Activated CD8-positive, alpha-beta T cell treated with anti-CD3 and anti-CD28 coated beads for 36 hours (primary cell): ENCODE measurements at regions of chr7 and their contacts with region 1.

Region 1: DNA sequence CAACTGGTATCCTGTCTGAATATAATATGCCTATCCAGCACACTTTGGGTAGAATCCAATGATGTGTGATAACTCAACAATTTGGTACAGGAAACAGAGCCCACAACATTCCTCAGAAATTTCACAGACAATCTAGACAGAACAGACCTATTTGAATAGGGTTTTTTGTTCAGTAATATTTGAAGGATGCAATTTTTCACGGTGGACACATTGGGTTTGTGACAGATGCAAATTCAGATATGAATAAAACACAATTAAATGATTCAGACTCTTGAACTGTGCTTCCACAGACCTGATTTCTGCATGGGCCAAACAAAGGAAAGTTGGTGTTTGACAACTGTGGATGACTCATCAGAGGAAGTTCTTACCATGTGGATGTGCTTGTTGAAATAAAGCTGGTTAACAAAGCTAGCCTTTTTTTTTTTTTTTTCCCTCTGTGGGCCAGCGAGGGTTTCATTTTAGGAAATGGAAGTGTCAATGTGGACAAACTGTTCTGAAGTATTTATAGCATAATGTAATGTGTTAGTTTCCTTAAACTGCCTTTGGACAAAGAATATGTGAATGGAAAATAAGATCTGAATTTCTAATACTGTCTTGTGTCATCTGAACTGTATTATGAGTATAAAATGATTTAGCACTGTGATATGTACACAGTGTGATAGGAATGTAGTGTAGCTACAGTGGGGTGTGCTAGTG is 43.2 kb upstream of the FAM133B start:
- DNase-seq: peak; percentile 54
- ATAC-seq: peak; percentile 17
- H3K4me3 Mint-ChIP-seq: peak overlapping the region; percentile 39
- H3K27ac Mint-ChIP-seq: peak overlapping the region; percentile 96
- H3K4me1 Mint-ChIP-seq: peaks cover 76% of the 10 kb centered on the region
- H3K27me3 Mint-ChIP-seq: no peaks in the 10 kb centered on the region
- CTCF ChIP-seq: no peak

Region 2: GRCh38 chr7:92402920-92403759 is 230.2 kb before region 1 on chr7:
- CTCF ChIA-PET with region 1: no interaction called
- POLR2A ChIA-PET with region 1: no interaction called
- intact Hi-C with region 1: no loop called
- DNase-seq: no peak
- ATAC-seq: no peak
- H3K4me3 Mint-ChIP-seq: no peak overlapping the region
- H3K27ac Mint-ChIP-seq: no peak overlapping the region
- H3K4me1 Mint-ChIP-seq: peaks cover 17% of the 10 kb centered on the region
- H3K27me3 Mint-ChIP-seq: no peaks in the 10 kb centered on the region
- CTCF ChIP-seq: no peak

Region 3: DNA sequence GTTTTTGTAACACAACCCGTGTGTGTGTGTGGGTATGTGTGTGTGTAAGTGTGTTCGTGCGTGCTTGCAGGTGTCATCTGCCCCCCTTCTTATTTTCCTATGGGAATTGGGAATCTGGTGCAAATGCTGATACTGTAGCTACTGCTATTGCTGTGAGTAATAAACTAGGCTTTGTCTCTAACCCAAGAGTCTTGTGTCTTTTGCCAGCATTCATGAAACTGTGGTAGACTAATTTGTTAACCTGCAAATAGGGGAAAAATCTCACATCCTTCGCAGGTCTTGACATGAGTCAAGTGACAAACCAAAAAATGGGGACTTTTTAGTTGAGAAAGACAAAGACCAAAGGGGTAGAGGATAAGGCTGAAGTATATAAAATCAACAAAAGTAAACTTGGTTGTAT is 14.7 kb after region 1 on chr7:
- CTCF ChIA-PET with region 1: interaction called, 9 read pairs
- POLR2A ChIA-PET with region 1: interaction called, 17 read pairs
- intact Hi-C with region 1: loop called (anchors 2 kb)
- DNase-seq: no peak
- ATAC-seq: peak; percentile 66
- H3K4me3 Mint-ChIP-seq: no peak overlapping the region
- H3K27ac Mint-ChIP-seq: peak overlapping the region; percentile 92
- H3K4me1 Mint-ChIP-seq: peaks cover 85% of the 10 kb centered on the region
- H3K27me3 Mint-ChIP-seq: no peaks in the 10 kb centered on the region
- CTCF ChIP-seq: no peak

Region 4: GRCh38 chr7:92669616-92670165 is 36.3 kb after region 1 on chr7:
- CTCF ChIA-PET with region 1: no interaction called
- POLR2A ChIA-PET with region 1: interaction called, 11 read pairs
- intact Hi-C with region 1: no loop called
- DNase-seq: no peak
- ATAC-seq: no peak
- H3K4me3 Mint-ChIP-seq: no peak overlapping the region
- H3K27ac Mint-ChIP-seq: peak overlapping the region; percentile 17
- H3K4me1 Mint-ChIP-seq: peaks cover 50% of the 10 kb centered on the region
- H3K27me3 Mint-ChIP-seq: no peaks in the 10 kb centered on the region
- CTCF ChIP-seq: no peak

Region 5: GRCh38 chr7:92682903-92683539 is 49.7 kb after region 1 on chr7:
- CTCF ChIA-PET with region 1: interaction called, 10 read pairs
- POLR2A ChIA-PET with region 1: interaction called, 7 read pairs
- intact Hi-C with region 1: loop called (anchors 2 kb)
- DNase-seq: peak; percentile 45
- ATAC-seq: peak; percentile 52
- H3K4me3 Mint-ChIP-seq: peak overlapping the region; percentile 29
- H3K27ac Mint-ChIP-seq: peak overlapping the region; percentile 95
- H3K4me1 Mint-ChIP-seq: peaks cover 78% of the 10 kb centered on the region
- H3K27me3 Mint-ChIP-seq: no peaks in the 10 kb centered on the region
- CTCF ChIP-seq: no peak

Region 6: DNA sequence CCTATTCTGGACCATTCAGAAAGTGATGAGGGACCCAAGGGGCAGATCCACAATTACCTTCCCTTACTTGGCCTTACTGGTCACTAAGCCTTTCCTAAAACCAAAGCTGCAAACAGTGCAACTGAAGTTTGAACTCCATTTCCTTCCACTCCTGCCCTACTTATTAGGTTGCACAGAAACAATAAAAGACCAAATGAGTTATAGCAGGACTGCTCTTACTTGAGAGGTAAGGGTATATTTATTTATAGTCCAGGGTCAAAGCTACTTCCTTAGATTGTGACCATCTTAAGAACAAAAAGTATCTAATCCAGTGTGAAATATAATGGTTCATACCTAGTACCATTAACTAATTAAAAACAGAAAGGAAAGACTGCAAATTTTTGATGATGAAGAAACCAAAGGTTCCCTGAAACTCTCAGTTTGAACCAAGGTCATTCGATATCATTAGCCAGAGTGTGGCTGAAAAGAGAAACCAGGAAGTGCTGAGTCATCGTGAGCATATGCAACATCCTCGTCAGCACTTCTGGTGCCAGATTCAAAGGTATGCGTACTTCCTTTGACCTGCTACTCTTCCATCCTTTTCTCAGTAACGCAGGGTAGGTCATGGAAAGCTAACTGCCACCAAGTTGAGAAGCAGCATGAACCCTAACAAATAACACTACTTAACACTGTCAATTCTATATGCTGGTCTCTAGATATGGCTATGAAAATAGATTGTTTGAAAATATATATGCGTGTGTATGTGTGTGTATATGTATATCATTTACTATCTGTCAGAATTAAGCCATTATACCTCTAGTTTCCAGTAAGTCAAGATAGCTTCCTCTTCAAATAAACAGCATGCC is 176.3 kb after region 1 on chr7:
- CTCF ChIA-PET with region 1: interaction called, 4 read pairs
- POLR2A ChIA-PET with region 1: interaction called, 5 read pairs
- intact Hi-C with region 1: loop called (anchors 2 kb)
- DNase-seq: peak; percentile 81
- ATAC-seq: peak; percentile 64
- H3K4me3 Mint-ChIP-seq: peak overlapping the region; percentile 38
- H3K27ac Mint-ChIP-seq: peak overlapping the region; percentile 92
- H3K4me1 Mint-ChIP-seq: peaks cover 69% of the 10 kb centered on the region
- H3K27me3 Mint-ChIP-seq: no peaks in the 10 kb centered on the region
- CTCF ChIP-seq: no peak